ENCODE measurements at regions of chrX and their contacts with region 1.

Region 1: DNA sequence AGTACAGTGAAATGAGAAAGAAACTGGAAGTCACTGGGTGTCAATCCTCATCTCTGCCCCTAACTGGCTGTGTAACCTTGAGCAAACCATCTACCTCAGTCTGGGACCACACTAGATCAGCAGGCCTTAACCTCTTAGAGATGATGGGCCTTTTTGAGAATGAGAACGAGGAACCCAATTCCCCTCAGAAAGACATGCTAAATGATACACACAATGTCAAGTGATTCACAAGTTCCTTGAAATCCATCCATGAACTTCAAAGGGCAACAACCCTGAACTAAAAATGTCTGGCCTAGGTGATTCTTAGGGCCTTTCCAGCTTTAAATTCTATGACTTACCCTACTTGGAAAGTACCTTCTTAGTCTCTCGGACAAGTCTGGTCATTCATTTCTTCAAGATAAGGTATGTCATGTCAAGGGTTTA is 47.4 kb downstream of the ACSL4 start:
- DNase-seq: no peak
- H3K4me3 ChIP-seq: no peak overlapping the region
- H3K27ac ChIP-seq: no peak overlapping the region
- H3K4me1 ChIP-seq: no peaks in the 10 kb centered on the region
- H3K27me3 ChIP-seq: peaks cover 4% of the 10 kb centered on the region
- CTCF ChIP-seq: no peak

Region 2: GRCh38 chrX:109660435-109661143 is 25.1 kb before region 1 on chrX:
- CTCF ChIA-PET with region 1: interaction called, 14 read pairs
- POLR2A ChIA-PET with region 1: no interaction called
- intact Hi-C with region 1: no loop called
- DNase-seq: no peak
- H3K4me3 ChIP-seq: no peak overlapping the region
- H3K27ac ChIP-seq: no peak overlapping the region
- H3K4me1 ChIP-seq: no peaks in the 10 kb centered on the region
- H3K27me3 ChIP-seq: no peaks in the 10 kb centered on the region
- CTCF ChIP-seq: no peak

Region 3: DNA sequence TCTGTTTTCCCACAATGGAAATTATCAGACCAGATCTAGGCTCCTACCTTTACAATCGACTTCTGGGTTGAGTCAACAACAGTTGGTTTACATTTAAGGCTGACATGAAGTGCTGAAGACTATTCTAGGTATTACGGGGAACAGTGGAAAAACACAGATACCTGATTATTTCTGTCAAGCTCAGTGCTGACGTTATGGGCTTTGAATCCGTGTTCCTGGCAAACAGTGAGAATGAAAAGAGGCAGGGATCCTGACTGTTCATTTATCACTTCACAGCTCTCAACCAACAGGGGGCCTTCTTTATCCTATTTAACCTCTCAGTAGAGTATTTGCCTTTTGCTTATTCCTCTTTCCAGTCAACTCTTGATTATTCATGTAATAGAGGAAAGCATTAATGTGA is 360.3 kb after region 1 on chrX:
- CTCF ChIA-PET with region 1: no interaction called
- POLR2A ChIA-PET with region 1: no interaction called
- intact Hi-C with region 1: no loop called
- DNase-seq: peak; percentile 55
- H3K4me3 ChIP-seq: no peak overlapping the region
- H3K27ac ChIP-seq: no peak overlapping the region
- H3K4me1 ChIP-seq: peaks cover 4% of the 10 kb centered on the region
- H3K27me3 ChIP-seq: no peaks in the 10 kb centered on the region
- CTCF ChIP-seq: peak; percentile 34; the same call in 1 of the 2 replicates